ENCODE measurements at regions of chr6 and their contacts with region 1.

Region 1: GRCh38 chr6:82381278-82381677 is 17.7 kb downstream of the TPBG start:
- DNase-seq: no peak
- H3K4me3 ChIP-seq: no peak overlapping the region
- H3K27ac ChIP-seq: no peak overlapping the region
- H3K4me1 ChIP-seq: no peaks in the 10 kb centered on the region
- H3K27me3 ChIP-seq: no peaks in the 10 kb centered on the region
- CTCF ChIP-seq: no peak
- POLR2A ChIP-seq: no peak

Region 2: DNA sequence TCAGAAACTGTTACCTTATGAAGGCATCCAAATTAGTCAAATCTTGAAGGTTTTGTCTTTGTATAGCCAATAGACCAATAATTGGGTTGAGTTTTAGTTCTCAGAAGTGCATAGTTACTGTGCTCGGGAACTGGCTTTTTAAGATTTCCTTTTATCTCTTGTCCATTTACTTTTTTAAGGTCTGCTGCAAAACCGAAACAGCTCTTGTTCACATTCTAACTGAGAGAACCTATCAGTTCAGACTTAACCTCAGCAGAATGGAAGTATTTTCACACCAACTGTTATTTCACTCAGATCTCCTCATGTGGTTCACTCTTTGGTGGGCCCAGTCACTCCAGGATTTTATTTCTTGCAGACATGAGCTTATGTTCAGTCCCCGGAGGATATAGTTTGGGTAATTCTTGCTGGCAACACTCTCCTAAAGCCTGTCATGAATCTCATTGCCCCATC is 37.9 kb after region 1 on chr6:
- intact Hi-C with region 1: loop called (anchors 1 kb)
- DNase-seq: no peak
- H3K4me3 ChIP-seq: no peak overlapping the region
- H3K27ac ChIP-seq: no peak overlapping the region
- H3K4me1 ChIP-seq: no peaks in the 10 kb centered on the region
- H3K27me3 ChIP-seq: no peaks in the 10 kb centered on the region
- CTCF ChIP-seq: no peak
- POLR2A ChIP-seq: no peak

Measured in vagina (tissue), 2 donors.